ENCODE measurements at regions of chr5 and their contacts with region 1.

Region 1: DNA sequence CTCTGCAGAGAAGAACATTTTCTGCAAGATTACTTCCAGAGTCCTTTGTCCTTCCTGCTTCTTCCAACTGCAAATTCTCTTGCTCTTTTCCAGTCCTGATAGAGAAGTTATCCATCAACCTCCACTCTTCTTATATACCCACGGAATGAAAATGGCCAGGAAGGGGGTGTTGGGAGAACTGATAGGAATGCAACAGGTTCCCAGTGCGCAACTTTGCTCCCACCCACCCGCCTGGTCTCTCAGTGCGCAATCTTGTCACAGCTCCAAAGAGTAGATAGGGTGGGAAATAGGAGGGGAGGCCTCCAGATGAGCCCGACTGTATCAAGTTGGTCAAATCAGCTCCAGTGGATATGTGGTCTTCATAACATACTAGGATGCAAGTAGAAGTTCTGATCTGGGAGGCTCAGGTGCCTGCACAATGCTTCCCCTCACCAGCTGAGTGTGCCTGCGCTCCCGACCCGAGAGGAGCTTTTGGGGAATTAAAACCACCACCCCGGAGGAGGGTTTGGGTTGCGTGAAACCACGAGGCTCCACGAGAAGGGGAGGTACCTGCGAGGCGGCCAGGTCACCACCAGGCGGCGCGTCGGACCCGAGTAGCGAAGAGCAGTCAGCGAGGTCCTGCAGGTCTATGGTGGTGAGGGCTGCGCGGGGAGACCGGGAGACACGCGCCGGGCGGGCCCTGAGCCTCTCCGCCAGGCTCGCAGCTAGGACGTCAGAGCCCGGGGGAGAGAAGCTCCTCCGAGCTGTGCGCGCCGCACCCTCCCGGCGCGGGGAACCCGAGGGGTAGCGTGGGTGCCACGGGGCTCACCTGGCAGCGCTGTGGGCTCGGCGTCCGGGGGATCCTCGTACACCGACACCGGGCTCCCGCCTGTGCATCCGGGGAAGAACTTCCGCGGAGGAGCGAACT is 835 bp downstream of the MCIDAS start:
- DNase-seq: peak; percentile 83 to 87
- H3K4me3 ChIP-seq: peak overlapping the region; percentile 6 to 52 (median 19)
- H3K27ac ChIP-seq: peak overlapping the region in 2 of 3 donors; percentile 30 to 79
- H3K4me1 ChIP-seq: peaks cover 12 to 22% of the 10 kb centered on the region in 2 donors
- H3K27me3 ChIP-seq: no peaks in the 10 kb centered on the region
- CTCF ChIP-seq: peak; percentile 44 to 91 (median 76)
- POLR2A ChIP-seq: peak in 1 of 2 donors; percentile 54

Region 2: DNA sequence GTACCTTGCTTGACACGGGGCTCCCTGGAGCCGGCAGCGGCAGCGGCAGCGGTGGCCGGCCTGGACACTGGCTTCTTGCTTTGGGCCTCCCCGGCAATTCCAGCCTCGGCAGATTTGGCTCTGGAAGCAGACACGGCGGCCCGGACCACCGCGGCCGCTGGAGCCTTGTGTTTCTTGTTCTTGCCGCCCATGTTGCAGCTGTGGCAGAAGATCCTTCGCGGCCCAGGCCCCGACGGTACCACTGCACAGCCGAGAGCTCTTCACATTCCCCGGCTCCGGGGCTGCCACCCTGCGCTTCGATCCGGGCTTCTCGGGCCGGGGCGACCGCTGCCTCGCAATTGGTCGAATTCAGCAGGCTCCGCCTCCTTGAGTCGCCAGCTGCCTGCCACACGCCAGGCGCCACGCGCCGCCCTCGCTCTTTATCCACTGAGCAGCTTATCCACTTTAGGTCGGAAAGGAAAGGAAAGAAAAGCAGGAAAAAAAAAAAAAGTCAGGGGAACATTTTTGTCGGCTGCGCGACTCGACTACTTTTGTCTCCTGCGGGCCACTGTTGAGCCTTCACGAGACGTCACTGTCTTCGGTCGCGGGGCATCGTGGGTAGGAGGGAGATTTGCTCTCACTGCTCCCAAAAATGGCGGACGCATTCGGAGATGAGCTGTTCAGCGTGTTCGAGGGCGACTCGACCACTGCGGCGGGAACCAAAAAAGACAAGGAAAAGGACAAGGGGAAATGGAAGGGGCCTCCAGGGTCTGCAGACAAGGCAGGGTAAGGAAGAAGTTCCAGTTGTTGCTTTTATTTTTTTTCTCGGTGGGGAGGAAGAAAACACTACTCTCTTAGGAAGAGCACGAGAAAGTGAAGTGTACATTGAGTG is 81.3 kb after region 1 on chr5 and contains the starts of genes DHX29 and MTREX:
- intact Hi-C with region 1: loop called (anchors 10 kb)
- DNase-seq: peak; percentile 95
- H3K4me3 ChIP-seq: peak within 1 kb of the TSS; percentile 41 to 87 (median 52)
- H3K27ac ChIP-seq: peak within 1 kb of the TSS; percentile 91 to 95 (median 95)
- H3K4me1 ChIP-seq: peaks cover 44 to 56% of the 10 kb centered on the region in 2 donors
- H3K27me3 ChIP-seq: no peaks in the 10 kb centered on the region
- CTCF ChIP-seq: peak in 1 of 6 experiments; percentile 12
- POLR2A ChIP-seq: peak; percentile 55 to 93
- total RNA-seq, gene DHX29: 39.1 to 54.0 (median 47.0) TPM
- total RNA-seq, gene MTREX: 86.3 to 94.4 (median 92.6) TPM

Region 3: DNA sequence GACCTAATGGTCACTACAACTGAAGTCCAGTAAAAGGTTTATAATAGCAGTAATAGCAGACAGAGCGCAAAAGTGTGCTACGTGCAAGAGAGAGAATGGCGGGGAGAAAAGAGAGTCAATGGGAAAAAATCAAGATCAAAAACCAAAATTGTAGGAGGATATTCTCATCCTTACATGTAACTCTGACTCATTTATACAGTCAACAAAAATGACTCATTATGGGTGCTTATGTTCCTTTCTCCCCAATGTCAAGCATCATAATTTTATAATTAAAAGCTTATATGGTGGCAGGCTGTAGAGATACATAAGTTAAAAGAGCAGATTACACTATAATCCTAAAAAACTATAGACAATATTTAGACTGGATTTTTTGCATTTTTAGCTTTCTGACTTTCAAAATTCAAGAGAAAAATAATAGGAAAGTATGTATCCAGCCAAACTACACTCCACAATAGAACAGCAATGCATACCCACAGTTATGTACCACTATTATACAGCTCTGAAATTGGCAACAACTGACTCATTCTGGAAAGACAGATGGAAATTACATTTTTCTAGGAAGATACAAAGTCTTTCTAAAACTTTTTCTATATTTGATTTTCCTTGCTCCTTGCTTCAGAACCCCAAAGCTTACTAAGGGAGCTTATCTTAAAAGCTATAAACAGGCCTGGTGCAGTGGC is 230.1 kb after region 1 on chr5:
- intact Hi-C with region 1: no loop called
- DNase-seq: no peak
- H3K4me3 ChIP-seq: no peak overlapping the region
- H3K27ac ChIP-seq: no peak overlapping the region
- H3K4me1 ChIP-seq: peaks cover 0 to 12% of the 10 kb centered on the region in 2 donors
- H3K27me3 ChIP-seq: no peaks in the 10 kb centered on the region
- CTCF ChIP-seq: no peak
- POLR2A ChIP-seq: no peak